AG04450 (cell line): ENCODE measurements at regions of chr2 and their contacts with region 1.

Region 1: DNA sequence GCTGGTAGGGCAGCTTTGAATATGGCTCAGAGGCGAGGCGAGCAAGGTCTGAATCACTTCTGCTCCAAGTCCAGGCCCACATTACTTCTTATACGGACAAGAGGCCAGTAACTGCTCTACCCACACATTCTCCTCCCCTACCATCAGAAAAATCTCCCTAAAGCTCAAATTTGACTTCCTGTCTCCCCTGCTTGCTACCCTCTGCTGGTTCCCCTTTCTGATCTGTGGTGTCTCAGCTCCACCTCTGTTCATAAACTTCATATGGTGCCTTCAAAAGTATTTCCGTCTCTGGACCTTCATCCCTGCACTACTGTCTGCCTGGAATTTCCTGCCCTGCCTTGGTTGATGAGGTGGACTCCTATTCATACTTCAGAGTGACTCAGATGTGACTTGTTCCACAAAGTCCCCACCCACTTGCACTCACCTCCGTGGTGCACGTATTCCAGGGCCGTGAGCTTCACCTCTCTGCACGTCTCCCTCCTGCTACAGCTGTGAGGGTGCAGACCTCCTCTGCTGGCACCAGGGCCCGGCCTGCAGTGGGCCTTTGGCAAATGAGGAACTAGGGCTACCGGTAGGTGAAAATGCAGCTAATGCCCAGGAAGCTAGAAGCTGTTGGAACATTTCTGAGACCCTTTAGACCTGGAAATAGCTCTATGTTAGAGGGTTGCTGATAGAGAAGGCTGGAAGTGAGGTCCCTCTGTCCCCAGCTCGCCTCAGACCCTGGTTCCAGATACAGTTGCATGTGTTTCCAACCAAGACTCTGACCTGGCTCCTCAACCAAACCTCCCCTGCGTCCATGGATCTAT is 24.6 kb upstream of the KCMF1 start:
- DNase-seq: no peak
- H3K4me3 ChIP-seq: no peak overlapping the region
- H3K27ac ChIP-seq: peak overlapping the region; percentile 12
- H3K27me3 ChIP-seq: no peaks in the 10 kb centered on the region
- CTCF ChIP-seq: no peak

Region 2: GRCh38 chr2:84958135-84959044 is 12.0 kb after region 1 on chr2:
- CTCF ChIA-PET with region 1: interaction called, 7 read pairs
- POLR2A ChIA-PET with region 1: interaction called, 10 read pairs
- DNase-seq: peak; percentile 70
- H3K4me3 ChIP-seq: no peak overlapping the region
- H3K27ac ChIP-seq: peak overlapping the region; percentile 95
- H3K27me3 ChIP-seq: no peaks in the 10 kb centered on the region
- CTCF ChIP-seq: no peak

Region 3: GRCh38 chr2:85181134-85181631 is 234.8 kb after region 1 on chr2:
- CTCF ChIA-PET with region 1: no interaction called
- POLR2A ChIA-PET with region 1: no interaction called
- DNase-seq: no peak
- H3K4me3 ChIP-seq: no peak overlapping the region
- H3K27ac ChIP-seq: no peak overlapping the region
- H3K27me3 ChIP-seq: no peaks in the 10 kb centered on the region
- CTCF ChIP-seq: 0 out of 2 replicates have a peak, but pooled peaks have one; percentile 6